Gastrocnemius medialis (tissue), 4 donors: ENCODE measurements at regions of chr18 and their contacts with region 1.

Region 1: DNA sequence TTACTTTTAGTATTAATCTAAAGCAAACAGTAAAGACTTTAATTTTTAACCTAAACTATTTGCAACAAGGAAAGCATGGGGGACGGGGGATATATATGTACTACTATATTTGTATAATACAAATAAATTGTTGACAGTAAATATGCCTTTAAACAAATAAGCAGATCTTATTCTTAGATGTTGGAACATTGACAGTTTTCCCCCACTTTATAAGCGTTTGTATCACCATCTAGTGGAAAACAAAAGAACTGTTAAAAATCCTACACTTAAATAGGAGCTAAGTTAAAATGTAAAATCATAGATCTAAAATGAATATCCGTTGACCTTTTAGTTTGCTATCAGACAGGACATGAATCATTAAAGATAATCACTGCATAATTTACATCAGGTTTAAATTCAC is 50.0 kb downstream of the RBBP8 start:
- DNase-seq: no peak
- ATAC-seq: no peak
- H3K4me3 ChIP-seq: no peak overlapping the region
- H3K27ac ChIP-seq: no peak overlapping the region
- H3K4me1 ChIP-seq: no peaks in the 10 kb centered on the region
- H3K27me3 ChIP-seq: no peaks in the 10 kb centered on the region
- CTCF ChIP-seq: peak in 3 of 5 experiments; percentile 10 to 31 (median 15)
- POLR2A ChIP-seq: no peak

Region 2: DNA sequence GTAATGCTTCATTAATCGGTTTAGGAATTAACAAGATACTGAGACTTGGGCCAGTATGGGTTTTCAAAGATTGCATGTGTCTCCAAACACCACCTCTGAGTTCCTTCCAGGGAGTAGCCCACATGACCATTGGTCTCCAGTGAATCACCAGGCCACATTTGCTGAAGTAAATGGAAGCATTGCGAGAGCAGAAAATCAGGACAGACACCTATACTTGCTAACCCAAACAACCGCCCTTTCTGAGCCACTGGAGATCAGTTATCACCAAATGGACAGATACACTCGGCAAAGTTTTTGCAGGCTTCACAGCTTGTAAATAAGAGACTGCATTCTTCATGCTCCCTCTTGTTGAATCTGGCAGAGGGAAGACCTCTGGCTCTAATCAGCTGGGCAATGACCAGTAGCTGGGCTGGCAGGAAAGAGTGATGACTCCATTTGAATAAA is 772.8 kb before region 1 on chr18:
- in situ Hi-C with region 1: no loop called
- intact Hi-C with region 1: no loop called
- DNase-seq: no peak
- ATAC-seq: no peak
- H3K4me3 ChIP-seq: no peak overlapping the region
- H3K27ac ChIP-seq: no peak overlapping the region
- H3K4me1 ChIP-seq: no peaks in the 10 kb centered on the region
- H3K27me3 ChIP-seq: no peaks in the 10 kb centered on the region
- CTCF ChIP-seq: no peak
- POLR2A ChIP-seq: no peak

Region 3: DNA sequence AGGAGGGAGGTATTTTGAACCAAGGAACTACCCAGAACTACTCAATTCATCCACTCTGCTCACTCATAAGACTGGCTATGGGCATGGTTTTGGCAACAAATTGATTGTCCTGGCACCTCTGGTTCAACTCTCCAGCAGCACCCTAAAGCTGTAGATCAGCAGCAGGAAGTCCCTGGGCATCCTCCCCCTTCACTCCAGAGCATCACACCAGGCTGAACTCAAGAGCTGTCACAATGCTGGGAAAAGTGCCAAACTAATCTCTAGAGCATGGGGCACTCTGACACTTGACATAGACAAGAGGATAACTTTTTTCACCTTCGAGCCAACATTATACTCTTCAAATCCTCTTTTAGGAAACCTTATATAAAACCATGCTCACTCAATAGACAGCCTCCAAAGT is 204.2 kb before region 1 on chr18:
- in situ Hi-C with region 1: loop called in 1 of 4 experiments (anchors 25 kb)
- intact Hi-C with region 1: no loop called
- DNase-seq: no peak
- ATAC-seq: no peak
- H3K4me3 ChIP-seq: no peak overlapping the region
- H3K27ac ChIP-seq: no peak overlapping the region
- H3K4me1 ChIP-seq: no peaks in the 10 kb centered on the region
- H3K27me3 ChIP-seq: no peaks in the 10 kb centered on the region
- CTCF ChIP-seq: no peak
- POLR2A ChIP-seq: no peak

Region 4: GRCh38 chr18:22800551-22800951 is 182.6 kb before region 1 on chr18:
- in situ Hi-C with region 1: loop called in 1 of 4 experiments (anchors 25 kb)
- intact Hi-C with region 1: loop called (anchors 5 kb)
- DNase-seq: no peak
- ATAC-seq: peak in 1 of 2 donors; percentile 36
- H3K4me3 ChIP-seq: no peak overlapping the region
- H3K27ac ChIP-seq: peak overlapping the region in 1 of 4 donors; percentile 43
- H3K4me1 ChIP-seq: peaks cover 5% of the 10 kb centered on the region in 2 donors
- H3K27me3 ChIP-seq: no peaks in the 10 kb centered on the region
- CTCF ChIP-seq: no peak
- POLR2A ChIP-seq: no peak

Region 5: DNA sequence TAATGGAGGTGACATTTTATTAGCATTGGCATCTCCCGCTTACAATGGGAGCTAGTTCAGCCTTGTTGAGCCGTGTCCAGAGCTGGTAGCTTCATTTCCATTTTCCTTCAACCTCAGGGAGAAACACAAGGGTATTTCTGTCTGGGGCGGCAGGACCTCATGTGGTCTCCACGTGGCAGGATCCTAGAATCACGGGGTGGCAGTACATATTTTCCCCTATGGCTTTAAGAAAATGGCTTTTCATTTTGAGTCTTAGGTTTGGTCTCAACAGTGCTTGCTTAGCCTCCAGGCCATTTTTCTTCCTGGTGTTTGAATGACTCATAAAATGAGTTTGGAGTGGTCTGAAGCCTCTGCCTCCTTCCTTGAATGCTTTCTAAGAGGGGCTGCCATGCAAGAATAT is 172.4 kb after region 1 on chr18:
- in situ Hi-C with region 1: no loop called
- intact Hi-C with region 1: no loop called
- DNase-seq: no peak
- ATAC-seq: no peak
- H3K4me3 ChIP-seq: no peak overlapping the region
- H3K27ac ChIP-seq: no peak overlapping the region
- H3K4me1 ChIP-seq: peaks cover 0 to 6% of the 10 kb centered on the region in 2 donors
- H3K27me3 ChIP-seq: no peaks in the 10 kb centered on the region
- CTCF ChIP-seq: no peak
- POLR2A ChIP-seq: no peak

Region 6: GRCh38 chr18:23183411-23184155 is 200.4 kb after region 1 on chr18:
- in situ Hi-C with region 1: no loop called
- intact Hi-C with region 1: no loop called
- DNase-seq: no peak
- ATAC-seq: no peak
- H3K4me3 ChIP-seq: no peak overlapping the region
- H3K27ac ChIP-seq: no peak overlapping the region
- H3K4me1 ChIP-seq: no peaks in the 10 kb centered on the region
- H3K27me3 ChIP-seq: no peaks in the 10 kb centered on the region
- CTCF ChIP-seq: no peak
- POLR2A ChIP-seq: no peak

Region 7: DNA sequence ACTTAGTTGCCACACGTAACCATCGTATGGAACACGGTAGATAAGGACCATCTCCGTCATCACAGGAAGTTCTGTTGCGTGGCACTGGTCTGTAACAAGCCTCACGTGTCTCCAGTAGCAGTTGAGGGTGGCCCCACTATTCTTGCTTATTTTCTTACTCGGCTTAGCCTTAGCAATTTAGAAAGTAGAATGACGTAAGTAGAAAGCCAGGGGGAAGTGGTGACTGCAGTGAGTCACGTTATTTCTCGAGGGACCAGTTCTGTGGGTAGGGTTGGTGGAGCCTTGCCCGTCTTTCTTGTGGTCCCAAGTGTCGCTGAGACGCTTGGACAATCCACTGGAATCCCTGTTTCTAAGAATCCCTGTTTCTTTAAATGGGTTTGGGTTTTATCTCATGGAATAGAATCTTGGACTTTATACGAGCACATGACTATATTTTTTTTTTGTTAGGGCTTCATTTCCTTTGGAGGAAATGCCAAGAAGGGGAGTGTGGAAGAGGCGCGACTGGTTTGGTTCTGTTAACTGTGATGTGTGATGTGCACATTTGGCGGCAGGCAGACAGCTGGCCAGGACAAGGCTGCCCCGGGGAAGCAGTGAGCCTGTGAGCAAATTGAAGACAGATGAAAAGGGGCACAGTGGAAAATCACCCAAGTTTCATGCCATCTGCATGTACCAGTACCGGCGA is 248.3 kb after region 1 on chr18:
- in situ Hi-C with region 1: no loop called
- intact Hi-C with region 1: no loop called
- DNase-seq: peak; percentile 54 to 72
- ATAC-seq: peak; percentile 68 to 80
- H3K4me3 ChIP-seq: no peak overlapping the region
- H3K27ac ChIP-seq: peak overlapping the region; percentile 47 to 72 (median 56)
- H3K4me1 ChIP-seq: peaks cover 9 to 17% of the 10 kb centered on the region in 2 donors
- H3K27me3 ChIP-seq: no peaks in the 10 kb centered on the region
- CTCF ChIP-seq: no peak
- POLR2A ChIP-seq: peak in 1 of 2 donors; percentile 26